ENCODE measurements at regions of chr13 and their contacts with region 1.

Region 1: DNA sequence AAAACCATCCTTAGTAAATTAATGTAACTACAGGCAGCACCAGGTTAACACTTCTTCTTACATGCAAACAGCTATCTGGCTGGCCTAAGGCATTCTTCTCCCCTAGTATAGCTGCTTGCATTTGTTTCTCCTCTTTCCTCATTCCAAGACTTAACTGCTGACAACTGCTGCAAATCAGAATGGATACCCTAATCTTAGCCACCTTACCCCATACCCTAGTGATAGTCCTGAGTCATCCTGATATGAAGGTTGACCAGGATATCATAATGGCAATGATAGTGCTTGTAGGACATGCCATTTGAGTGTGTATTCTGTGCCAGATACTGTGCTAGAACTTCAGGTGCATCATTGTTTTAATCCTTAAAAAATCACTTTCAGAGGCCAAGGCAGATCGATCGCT is 138.2 kb upstream of the MAB21L1 start:
- DNase-seq: no peak
- ATAC-seq: no peak
- H3K4me3 ChIP-seq: no peak overlapping the region
- H3K27ac ChIP-seq: no peak overlapping the region
- H3K4me1 ChIP-seq: no peaks in the 10 kb centered on the region
- H3K27me3 ChIP-seq: no peaks in the 10 kb centered on the region
- CTCF ChIP-seq: no peak

Region 2: DNA sequence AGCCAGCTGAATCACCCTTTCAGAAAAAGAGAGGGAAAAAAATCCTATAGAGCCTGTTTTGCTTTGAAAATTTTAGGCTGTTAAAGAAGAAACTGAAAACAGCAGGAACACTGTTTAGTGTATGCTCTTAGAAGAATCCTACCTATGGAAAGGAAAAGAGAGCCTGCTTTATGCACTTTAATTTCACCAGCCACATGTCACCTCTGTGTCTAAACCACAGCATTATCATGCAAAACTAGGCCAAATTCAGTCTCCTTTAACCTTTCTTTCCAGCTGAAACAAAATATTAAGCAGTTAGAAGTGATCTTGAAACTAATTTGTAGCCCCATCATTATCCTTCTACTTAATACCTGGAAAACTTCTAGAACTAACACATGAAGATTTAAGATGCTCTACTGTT is 41.0 kb before region 1 on chr13:
- CTCF ChIA-PET with region 1: no interaction called
- POLR2A ChIA-PET with region 1: no interaction called
- intact Hi-C with region 1: loop called (anchors 2 kb)
- DNase-seq: no peak
- ATAC-seq: no peak
- H3K4me3 ChIP-seq: no peak overlapping the region
- H3K27ac ChIP-seq: no peak overlapping the region
- H3K4me1 ChIP-seq: peaks cover 10% of the 10 kb centered on the region; the same call in 1 of the 2 replicates
- H3K27me3 ChIP-seq: no peaks in the 10 kb centered on the region
- CTCF ChIP-seq: no peak

Region 3: DNA sequence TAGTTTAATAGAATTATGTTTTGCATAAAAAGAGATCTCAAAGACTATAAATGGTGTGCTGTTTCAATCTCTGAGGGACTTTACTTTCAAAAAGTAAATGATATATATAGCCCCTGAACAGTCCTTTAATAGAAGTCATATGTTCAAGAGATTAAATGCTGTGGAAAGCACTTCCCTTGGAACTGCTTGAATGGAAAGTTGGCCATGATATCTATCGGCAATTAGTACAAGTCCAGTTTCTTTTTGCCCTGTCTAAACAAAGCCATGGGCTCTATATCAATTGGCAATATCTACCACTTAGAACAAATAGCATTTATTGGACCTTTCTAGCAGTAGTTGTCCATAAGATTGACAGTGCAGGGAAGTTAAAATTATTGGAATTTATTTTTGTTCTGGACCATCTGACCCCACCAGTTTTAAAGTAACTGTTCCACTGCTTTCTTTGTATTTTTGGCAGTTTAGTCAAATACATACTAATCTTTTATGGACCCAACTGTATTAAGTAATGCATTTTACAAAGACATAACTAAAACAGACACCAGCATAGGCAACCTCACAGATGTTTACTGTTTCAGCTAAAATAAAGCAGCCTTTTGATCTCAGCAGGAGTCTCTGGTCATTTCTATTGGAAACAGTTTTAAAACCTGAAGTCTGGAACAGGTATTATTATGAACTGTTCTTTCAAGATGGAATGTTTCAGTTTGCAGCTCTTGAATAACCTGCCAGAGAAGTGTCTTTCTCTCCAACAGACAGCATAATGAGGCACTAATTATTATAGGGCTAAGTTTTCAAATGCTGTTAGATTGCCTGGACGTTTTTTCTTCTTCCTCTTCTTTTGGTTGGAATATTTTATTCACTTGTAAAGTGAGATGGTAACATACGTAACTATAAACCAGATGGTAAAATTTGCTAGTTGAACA is 233.9 kb after region 1 on chr13:
- CTCF ChIA-PET with region 1: no interaction called
- POLR2A ChIA-PET with region 1: no interaction called
- intact Hi-C with region 1: no loop called
- DNase-seq: no peak
- ATAC-seq: no peak
- H3K4me3 ChIP-seq: no peak overlapping the region
- H3K27ac ChIP-seq: no peak overlapping the region
- H3K4me1 ChIP-seq: no peaks in the 10 kb centered on the region
- H3K27me3 ChIP-seq: no peaks in the 10 kb centered on the region
- CTCF ChIP-seq: no peak

Measured in PC-3 (cell line).